A673 (cell line): ENCODE measurements at regions of chr16 and their contacts with region 1.

Region 1: DNA sequence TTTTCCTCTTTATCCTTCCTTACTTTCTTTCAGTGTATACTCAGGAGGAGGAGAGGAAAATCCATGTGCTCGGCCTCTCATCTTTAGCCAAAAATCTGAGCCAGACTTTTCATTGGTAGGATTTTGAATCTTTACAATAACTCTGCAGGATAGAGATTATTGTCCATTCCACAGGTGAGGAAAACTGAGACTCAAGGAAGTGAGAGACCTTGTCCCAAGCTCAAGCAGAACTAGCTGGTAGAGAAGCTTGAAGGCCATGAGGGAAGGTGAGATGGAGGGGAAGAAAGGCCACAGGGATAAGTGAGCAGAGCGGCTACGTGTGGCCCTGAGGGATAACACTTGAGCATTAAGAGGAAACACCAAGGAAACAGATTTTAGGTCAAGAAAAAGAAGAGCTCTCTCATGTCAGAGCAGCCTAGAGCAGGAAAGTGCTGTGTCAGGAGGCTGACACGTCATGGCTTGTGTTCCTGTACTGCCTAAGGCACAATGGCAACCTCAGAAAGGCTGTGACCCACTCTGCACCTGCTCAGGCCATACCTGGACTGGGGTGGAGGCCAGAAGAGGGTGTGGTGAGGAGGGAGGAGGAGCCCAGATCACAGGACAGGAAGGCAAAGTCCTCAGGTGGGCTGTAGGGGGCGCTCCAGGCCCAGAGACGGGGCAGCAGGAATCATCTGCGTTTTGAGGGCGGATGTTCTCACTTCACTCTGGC is 11.9 kb downstream of the MT4 start:
- DNase-seq: peak; percentile 73
- H3K4me3 ChIP-seq: no peak overlapping the region
- H3K27ac ChIP-seq: no peak overlapping the region
- H3K4me1 ChIP-seq: no peaks in the 10 kb centered on the region
- H3K27me3 ChIP-seq: no peaks in the 10 kb centered on the region
- CTCF ChIP-seq: peak; percentile 84

Region 2: DNA sequence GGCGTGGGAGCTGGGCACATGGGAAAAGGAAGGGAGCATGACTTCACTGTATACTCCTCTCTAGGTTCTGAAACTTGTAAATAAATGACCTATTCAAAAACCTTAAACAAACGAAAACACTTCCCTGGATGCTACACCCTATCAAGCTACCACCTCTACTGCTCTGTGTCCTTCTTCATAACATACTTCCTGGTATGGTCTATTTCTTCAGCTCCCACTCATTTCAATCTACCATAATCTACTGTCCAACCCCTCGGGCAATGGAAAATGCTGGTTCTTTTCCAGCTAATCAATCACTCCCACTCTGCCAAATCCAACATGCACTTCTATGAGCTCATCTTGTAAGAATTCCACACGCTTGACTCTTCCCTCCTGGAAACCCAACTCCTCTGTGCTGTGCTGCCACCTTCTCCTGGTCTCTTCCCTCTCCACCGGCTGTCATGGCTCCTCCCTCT is 193.8 kb before region 1 on chr16:
- CTCF ChIA-PET with region 1: no interaction called
- POLR2A ChIA-PET with region 1: no interaction called
- intact Hi-C with region 1: no loop called
- DNase-seq: no peak
- H3K4me3 ChIP-seq: no peak overlapping the region
- H3K27ac ChIP-seq: no peak overlapping the region
- H3K4me1 ChIP-seq: no peaks in the 10 kb centered on the region
- H3K27me3 ChIP-seq: no peaks in the 10 kb centered on the region
- CTCF ChIP-seq: no peak

Region 3: GRCh38 chr16:56851671-56852400 is 275.1 kb after region 1 on chr16:
- CTCF ChIA-PET with region 1: no interaction called
- POLR2A ChIA-PET with region 1: no interaction called
- intact Hi-C with region 1: loop called (anchors 5 kb)
- DNase-seq: peak; percentile 36
- H3K4me3 ChIP-seq: no peak overlapping the region
- H3K27ac ChIP-seq: no peak overlapping the region
- H3K4me1 ChIP-seq: peaks cover 24% of the 10 kb centered on the region
- H3K27me3 ChIP-seq: no peaks in the 10 kb centered on the region
- CTCF ChIP-seq: peak; percentile 55